ENCODE measurements at regions of chr16 and their contacts with region 1.

Region 1: GRCh38 chr16:57256642-57257395 is 11.8 kb downstream of the ARL2BP start:
- DNase-seq: peak; percentile 39 to 60 (median 46)
- ATAC-seq: peak; percentile 58
- H3K4me3 ChIP-seq: no peak overlapping the region
- H3K27ac ChIP-seq: no peak overlapping the region
- H3K4me1 ChIP-seq: peaks cover 12 to 17% of the 10 kb centered on the region in 2 experiments; a peak in 4 of 5 replicates
- H3K27me3 ChIP-seq: no peaks in the 10 kb centered on the region
- CTCF ChIP-seq: no peak
- EP300 ChIP-seq: peak; percentile 24; the same call in 1 of the 2 replicates
- POLR2A ChIP-seq: no peak
- RAD21 ChIP-seq: no peak

Region 2: GRCh38 chr16:57244767-57245471 is 11.9 kb before region 1 on chr16 and contains the start of gene ARL2BP:
- CTCF ChIA-PET with region 1: no interaction called
- POLR2A ChIA-PET with region 1: interaction called, 15 read pairs
- in situ Hi-C with region 1: no loop called
- intact Hi-C with region 1: no loop called
- DNase-seq: peak; percentile 97 to 100 (median 100)
- ATAC-seq: peak; percentile 98
- H3K4me3 ChIP-seq: peak within 1 kb of the TSS; percentile 84
- H3K27ac ChIP-seq: peak within 1 kb of the TSS; percentile 79
- H3K4me1 ChIP-seq: peaks cover 7 to 8% of the 10 kb centered on the region in 2 experiments; a peak in 4 of 5 replicates
- H3K27me3 ChIP-seq: no peaks in the 10 kb centered on the region
- CTCF ChIP-seq: peak; percentile 26 to 68 (median 29); a peak in 4 of 6 replicates
- EP300 ChIP-seq: no peak
- POLR2A ChIP-seq: peak; percentile 78
- RAD21 ChIP-seq: peak; percentile 51 to 64
- polyA plus RNA-seq, gene ARL2BP: 16.7 to 17.1 TPM